Naive thymus-derived CD8-positive, alpha-beta T cell (primary cell): ENCODE measurements at regions of chr7 and their contacts with region 1.

Region 1: DNA sequence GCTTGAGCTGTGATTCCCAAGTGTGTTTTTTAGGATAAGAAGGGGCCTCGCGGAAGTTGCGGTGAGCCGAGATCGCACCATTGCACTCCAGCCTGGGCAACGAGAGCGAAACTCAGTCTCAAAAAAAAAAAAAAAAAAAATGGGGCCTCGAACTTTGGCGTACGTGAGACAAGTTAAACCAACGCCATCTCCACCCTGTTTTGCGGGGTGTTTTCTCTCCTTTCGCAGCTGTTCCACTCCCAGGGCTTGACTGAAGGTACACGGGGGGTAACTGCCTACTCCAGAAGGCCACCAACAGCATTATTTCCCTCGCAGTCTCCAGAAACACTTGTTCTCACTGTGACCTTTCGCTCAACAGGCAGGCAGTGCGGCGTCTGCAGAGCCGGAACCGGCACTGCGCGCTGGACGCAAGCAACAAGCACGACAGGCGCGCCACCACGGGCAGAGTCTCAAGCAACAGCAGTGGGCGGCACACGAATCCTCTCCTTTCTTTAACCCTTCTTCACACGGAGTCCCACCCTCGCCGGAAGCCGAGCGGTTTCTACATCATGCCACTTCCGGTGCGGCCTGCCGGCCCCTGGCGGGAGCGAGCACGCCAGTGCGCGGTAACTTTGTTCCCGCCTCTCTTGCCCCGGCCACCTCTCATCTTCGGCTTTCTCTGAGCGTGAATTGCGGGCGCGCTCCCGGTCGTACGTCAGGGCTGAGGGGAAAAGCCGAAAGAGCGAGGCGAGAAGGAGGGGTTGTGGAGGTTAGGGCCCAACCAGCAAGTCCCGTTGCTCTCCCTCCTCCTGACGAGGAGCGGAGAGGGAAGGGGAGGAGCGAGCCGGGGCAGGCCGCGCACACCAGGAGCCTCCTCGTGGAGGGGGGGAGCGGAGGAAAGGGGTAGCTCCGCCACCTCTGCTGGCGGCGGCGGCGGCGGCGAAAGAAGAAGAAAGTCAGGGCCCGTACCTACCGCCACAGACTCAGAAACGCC is 814 bp upstream of the CDK13 start:
- DNase-seq: peak; percentile 90 to 100 (median 99)
- ATAC-seq: peak; percentile 69 to 73
- H3K4me3 Mint-ChIP-seq: peak overlapping the region; percentile 89 to 100 (median 96)
- H3K27ac Mint-ChIP-seq: peak overlapping the region; percentile 98 to 100 (median 100)
- H3K4me1 Mint-ChIP-seq: peaks cover 23 to 41% (median 37%) of the 10 kb centered on the region in 4 donors
- H3K27me3 Mint-ChIP-seq: no peaks in the 10 kb centered on the region

Region 2: DNA sequence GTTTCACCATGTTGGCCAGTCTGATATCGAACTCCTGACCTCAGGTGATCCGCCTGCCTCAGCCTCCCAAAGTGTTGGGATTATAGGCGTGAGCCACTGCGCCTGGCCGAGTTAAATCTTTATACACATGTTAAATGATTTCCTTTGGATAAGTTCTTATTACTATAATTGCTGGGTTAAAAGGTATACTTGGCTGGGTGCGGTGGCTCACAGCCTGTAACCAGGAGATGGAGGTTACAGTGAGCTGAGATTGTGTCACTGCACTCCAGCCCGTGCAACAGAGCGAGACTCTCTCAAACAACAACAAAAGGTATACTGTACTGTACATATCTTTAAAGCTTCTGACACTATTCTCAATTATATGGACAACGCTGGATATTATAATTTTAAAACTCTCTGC is 52.4 kb before region 1 on chr7:
- POLR2A ChIA-PET with region 1: interaction called, 24 read pairs
- DNase-seq: no peak
- ATAC-seq: no peak
- H3K4me3 Mint-ChIP-seq: peak overlapping the region in 4 of 10 donors; percentile 18 to 56 (median 37)
- H3K27ac Mint-ChIP-seq: peak overlapping the region in 1 of 10 donors; percentile 17
- H3K4me1 Mint-ChIP-seq: peaks cover 0 to 3% (median 0%) of the 10 kb centered on the region in 4 donors
- H3K27me3 Mint-ChIP-seq: peaks cover 0 to 7% (median 0%) of the 10 kb centered on the region in 5 donors

Region 3: DNA sequence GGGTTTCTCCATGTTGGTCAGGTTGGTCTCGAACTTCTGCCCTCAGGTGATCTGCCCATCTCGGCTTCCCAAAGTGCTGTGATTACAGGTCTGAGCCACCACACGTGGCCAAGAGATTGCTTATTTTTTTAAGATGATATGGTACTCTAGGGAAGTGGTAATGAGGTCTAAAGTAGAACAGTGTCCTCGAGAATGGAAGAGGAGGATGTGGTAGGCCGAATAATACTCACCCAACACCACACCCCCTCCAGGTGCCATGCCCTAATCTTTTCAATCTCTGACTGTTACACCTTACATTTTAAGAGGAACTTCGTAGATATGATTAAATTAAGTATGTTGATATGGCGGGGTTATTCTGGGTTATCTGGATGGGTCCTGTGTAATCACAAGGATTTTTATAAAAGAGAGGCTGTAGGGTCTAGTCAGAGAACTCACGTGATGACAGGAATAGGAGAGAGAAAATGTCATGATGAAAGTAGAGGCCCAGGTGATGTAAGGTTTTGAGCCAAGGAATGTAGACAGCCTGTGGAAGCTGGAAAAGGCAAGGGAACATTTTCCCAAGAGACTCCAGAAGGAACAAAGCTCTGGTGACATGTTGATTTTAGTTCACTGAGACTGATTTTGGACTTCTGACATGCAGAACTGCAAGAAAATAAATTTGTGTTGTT is 30.3 kb after region 1 on chr7:
- POLR2A ChIA-PET with region 1: interaction called, 22 read pairs
- DNase-seq: peak in 5 of 10 donors; percentile 17 to 49 (median 36)
- ATAC-seq: peak; percentile 57 to 78
- H3K4me3 Mint-ChIP-seq: no peak overlapping the region
- H3K27ac Mint-ChIP-seq: no peak overlapping the region
- H3K4me1 Mint-ChIP-seq: peaks cover 9 to 38% (median 18%) of the 10 kb centered on the region in 4 donors
- H3K27me3 Mint-ChIP-seq: no peaks in the 10 kb centered on the region

Region 4: GRCh38 chr7:40057292-40057691 is 108.0 kb after region 1 on chr7:
- POLR2A ChIA-PET with region 1: interaction called, 18 read pairs
- DNase-seq: no peak
- ATAC-seq: no peak
- H3K4me3 Mint-ChIP-seq: no peak overlapping the region
- H3K27ac Mint-ChIP-seq: peak overlapping the region in 5 of 10 donors; percentile 7 to 24 (median 9)
- H3K4me1 Mint-ChIP-seq: peaks cover 4 to 17% (median 11%) of the 10 kb centered on the region in 4 donors
- H3K27me3 Mint-ChIP-seq: no peaks in the 10 kb centered on the region